Upper lobe of right lung (tissue), 1 donor: ENCODE measurements at regions of chr16 and their contacts with region 1.

Region 1: DNA sequence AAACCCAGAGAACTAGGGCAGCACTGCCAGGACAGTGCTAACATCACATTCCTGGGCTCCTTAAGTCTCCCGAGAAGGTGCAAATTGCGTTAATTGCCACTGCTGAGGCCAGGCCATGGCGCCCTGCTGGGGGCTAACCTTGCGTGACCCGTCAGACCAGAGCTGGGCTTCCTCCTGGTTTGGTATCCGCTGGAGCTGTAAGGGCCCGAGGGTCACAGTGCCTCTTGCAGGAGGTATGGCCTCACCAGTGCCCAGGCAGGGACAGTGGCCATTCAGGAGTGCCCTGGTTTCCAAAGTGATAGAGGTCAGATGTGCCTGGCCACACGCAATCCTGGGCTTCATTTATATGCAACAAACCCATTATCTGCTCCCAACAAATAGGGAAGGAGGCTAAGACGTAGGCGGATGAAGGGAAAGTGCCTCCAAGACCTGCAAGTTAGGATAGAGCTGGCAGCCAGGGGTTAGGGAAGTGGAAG is 17.7 kb upstream of the ADCY9 start:
- DNase-seq: no peak
- ATAC-seq: no peak
- H3K4me3 ChIP-seq: no peak overlapping the region
- H3K27ac ChIP-seq: no peak overlapping the region
- H3K4me1 ChIP-seq: no peaks in the 10 kb centered on the region
- H3K27me3 ChIP-seq: no peaks in the 10 kb centered on the region
- CTCF ChIP-seq: no peak

Region 2: DNA sequence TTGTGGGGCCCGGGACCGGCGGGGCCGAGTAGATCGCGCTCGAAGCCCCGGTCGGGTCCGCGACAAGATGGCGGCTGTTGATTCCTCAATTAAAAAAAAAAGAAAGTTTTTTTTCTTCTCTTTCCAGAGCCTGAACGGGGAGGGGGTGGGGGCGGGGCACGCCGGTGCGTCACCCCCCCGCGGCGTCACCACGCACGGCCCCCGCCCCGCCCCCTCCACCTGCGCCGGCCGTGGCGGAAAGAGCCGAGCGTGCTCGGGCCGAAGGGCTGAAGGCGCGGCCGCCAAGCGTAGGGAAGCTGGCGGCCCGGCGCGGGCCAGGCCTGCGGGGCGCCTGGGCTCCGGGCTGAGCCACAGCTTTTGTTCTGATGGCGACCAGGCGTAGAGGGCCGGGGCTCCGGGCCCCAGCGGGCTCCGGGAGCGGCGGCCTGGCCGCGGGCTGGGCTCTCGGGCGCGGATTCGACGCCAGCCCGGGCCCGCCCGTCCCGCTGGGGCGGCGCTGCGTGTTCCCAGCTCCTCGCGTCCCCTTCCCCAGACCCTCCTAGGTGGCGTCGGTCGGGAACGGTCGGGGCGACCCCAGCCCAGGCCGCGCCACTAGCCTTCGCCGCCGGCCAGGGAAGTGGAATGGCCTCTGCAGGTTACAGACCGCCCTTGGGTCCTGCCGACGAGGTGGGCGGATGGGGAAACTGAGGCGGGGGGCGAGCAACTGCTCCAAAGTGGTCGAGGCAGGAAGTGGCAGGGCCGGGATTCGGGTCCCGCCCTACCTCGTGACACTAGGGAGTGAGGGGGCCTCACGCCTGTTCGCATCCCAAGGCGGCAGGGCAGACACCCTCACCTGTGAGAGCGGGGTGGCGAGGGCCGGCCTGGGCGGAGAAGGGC is 253.1 kb before region 1 on chr16 and contains the start of gene CREBBP:
- intact Hi-C with region 1: no loop called
- DNase-seq: peak; percentile 93
- ATAC-seq: peak; percentile 95
- H3K4me3 ChIP-seq: peak within 1 kb of the TSS; percentile 82
- H3K27ac ChIP-seq: peak within 1 kb of the TSS; percentile 80
- H3K4me1 ChIP-seq: peaks cover 33% of the 10 kb centered on the region
- H3K27me3 ChIP-seq: no peaks in the 10 kb centered on the region
- CTCF ChIP-seq: no peak
- total RNA-seq, gene CREBBP: 72.8 TPM

Region 3: DNA sequence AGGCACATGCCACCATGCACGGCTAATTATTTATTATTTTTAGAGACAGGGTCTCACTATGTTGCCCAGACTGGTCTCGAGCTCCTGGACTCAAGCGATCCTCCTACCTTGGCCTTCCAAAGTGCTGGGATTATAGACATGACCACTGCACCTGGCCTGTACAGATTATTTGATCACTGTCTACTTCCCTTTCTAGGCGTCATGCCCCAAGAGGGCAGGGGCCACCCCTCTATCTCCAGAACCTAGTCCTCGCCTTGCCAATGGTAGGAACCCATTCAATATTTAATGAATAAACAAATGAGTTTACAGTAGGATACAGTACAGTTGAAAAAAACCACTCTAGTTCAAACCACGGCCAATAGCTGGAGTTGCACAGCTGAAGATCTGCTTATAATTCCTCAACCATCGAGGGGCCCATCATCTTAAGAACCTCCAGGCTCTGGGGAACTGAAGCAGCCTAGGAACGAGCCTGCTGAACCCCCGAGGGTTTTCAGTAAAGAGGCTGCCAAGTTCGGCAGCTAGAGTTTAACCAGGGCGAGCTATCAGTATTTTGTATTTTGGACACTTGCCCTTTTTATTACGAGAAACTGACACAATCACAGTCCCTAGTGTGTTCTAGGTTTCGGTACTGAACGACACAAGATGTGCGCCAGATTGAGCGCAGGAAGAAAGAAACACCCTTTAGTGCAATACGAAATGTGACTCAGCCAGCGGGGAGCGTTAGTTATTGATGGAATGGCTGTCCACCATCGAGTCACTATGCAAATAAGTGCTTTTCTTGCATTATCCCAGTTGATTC is 32.3 kb before region 1 on chr16:
- intact Hi-C with region 1: loop called (anchors 2 kb)
- DNase-seq: no peak
- ATAC-seq: no peak
- H3K4me3 ChIP-seq: no peak overlapping the region
- H3K27ac ChIP-seq: no peak overlapping the region
- H3K4me1 ChIP-seq: peaks cover 20% of the 10 kb centered on the region
- H3K27me3 ChIP-seq: no peaks in the 10 kb centered on the region
- CTCF ChIP-seq: no peak

Region 4: DNA sequence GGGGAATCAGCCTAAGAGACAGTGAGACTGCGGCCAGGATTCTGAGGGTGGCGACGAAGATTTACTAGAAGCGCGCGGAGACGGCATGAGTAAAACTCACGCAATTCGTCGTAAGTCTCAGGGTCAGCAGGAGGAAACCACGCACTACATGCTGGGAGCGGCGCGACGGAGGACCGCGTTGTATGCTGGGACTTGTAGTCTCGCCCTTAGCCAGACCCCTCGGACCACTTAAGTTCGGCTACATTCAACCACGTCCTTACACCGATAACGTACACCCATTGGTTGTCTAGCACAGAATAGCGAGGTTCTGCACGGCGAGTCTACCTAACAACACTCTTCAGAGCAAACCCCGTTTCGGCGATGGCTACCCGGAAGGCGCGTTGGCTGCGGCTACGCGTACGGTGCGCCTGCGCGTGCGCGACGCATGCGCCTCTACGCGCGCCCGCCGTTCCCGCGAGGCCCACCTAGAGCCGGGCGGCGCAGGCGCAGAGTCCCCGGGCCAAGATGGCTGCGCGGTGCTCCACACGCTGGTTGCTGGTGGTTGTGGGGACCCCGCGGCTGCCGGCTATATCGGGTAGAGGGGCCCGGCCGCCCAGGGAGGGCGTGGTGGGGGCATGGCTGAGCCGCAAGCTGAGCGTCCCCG is 291.6 kb after region 1 on chr16 and contains the start of gene DNAJA3:
- intact Hi-C with region 1: no loop called
- DNase-seq: peak; percentile 97
- ATAC-seq: peak; percentile 98
- H3K4me3 ChIP-seq: peak within 1 kb of the TSS; percentile 97
- H3K27ac ChIP-seq: peak within 1 kb of the TSS; percentile 98
- H3K4me1 ChIP-seq: peaks cover 13% of the 10 kb centered on the region
- H3K27me3 ChIP-seq: no peaks in the 10 kb centered on the region
- CTCF ChIP-seq: no peak
- total RNA-seq, gene DNAJA3: 36.1 TPM